ENCODE measurements at regions of chr12 and their contacts with region 1.

Region 1: DNA sequence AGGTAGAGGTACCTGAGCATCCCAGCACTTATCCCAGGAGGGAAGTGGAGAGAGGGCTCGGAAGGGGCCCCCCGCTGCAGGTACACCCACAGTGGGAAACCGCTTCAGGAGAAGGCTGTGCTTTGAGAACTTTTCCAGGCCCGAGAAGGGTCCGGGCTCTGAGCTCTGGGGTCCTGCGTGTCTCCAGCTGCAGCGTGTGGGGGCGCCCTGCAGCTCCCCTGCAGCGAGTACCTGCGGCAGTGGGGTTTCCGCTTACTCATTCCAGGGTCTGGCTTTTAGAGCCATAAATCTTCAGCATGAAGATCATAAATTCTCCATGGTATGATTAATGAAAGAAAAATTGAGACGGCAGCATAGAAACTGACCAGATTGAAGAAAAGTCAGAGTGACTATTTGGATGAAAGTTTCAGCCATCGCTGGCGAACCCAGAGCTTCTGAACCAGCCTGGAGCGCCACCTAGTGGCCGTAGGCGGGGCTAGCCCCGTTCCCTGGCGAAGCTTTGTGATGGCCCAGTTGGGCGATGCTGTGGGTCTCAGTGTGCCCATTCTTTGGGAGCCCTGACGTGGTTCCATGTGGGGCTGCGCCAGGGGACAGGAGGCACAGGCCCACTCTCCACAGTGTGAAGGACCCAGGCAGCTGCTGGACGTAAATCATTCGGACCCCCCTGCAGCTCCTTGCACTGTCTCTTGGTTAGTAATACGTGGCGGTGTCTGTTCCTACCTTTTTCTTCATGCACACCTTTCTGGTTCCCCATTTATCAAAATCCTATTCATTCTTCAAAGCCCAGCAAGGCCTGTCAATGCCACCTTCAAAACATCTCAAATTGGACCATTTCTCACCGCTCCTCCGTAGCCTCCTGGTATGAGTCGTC is 198.2 kb downstream of the TSPAN9 start:
- DNase-seq: peak; percentile 58 to 79
- ATAC-seq: peak; percentile 59 to 85 (median 60)
- H3K4me3 ChIP-seq: no peak overlapping the region
- H3K4me3 Mint-ChIP-seq: no peak overlapping the region
- H3K27ac ChIP-seq: no peak overlapping the region
- H3K27ac Mint-ChIP-seq: no peak overlapping the region
- H3K4me1 ChIP-seq: peaks cover 4% of the 10 kb centered on the region
- H3K4me1 Mint-ChIP-seq: no peaks in the 10 kb centered on the region
- H3K27me3 ChIP-seq: no peaks in the 10 kb centered on the region
- H3K27me3 Mint-ChIP-seq: peaks cover 20 to 23% of the 10 kb centered on the region in 2 donors
- CTCF ChIP-seq: peak; percentile 78

Region 2: GRCh38 chr12:3073438-3074250 is 201.8 kb before region 1 on chr12:
- intact Hi-C with region 1: loop called (anchors 1 kb)
- DNase-seq: peak; percentile 73 to 91
- ATAC-seq: peak; percentile 54 to 68 (median 60)
- H3K4me3 ChIP-seq: no peak overlapping the region
- H3K4me3 Mint-ChIP-seq: no peak overlapping the region
- H3K27ac ChIP-seq: no peak overlapping the region
- H3K27ac Mint-ChIP-seq: no peak overlapping the region
- H3K4me1 ChIP-seq: peaks cover 14% of the 10 kb centered on the region
- H3K4me1 Mint-ChIP-seq: peaks cover 0 to 12% of the 10 kb centered on the region in 2 donors
- H3K27me3 ChIP-seq: peaks cover 3% of the 10 kb centered on the region
- H3K27me3 Mint-ChIP-seq: peaks cover 15 to 21% of the 10 kb centered on the region in 2 donors
- CTCF ChIP-seq: peak; percentile 97

Region 3: DNA sequence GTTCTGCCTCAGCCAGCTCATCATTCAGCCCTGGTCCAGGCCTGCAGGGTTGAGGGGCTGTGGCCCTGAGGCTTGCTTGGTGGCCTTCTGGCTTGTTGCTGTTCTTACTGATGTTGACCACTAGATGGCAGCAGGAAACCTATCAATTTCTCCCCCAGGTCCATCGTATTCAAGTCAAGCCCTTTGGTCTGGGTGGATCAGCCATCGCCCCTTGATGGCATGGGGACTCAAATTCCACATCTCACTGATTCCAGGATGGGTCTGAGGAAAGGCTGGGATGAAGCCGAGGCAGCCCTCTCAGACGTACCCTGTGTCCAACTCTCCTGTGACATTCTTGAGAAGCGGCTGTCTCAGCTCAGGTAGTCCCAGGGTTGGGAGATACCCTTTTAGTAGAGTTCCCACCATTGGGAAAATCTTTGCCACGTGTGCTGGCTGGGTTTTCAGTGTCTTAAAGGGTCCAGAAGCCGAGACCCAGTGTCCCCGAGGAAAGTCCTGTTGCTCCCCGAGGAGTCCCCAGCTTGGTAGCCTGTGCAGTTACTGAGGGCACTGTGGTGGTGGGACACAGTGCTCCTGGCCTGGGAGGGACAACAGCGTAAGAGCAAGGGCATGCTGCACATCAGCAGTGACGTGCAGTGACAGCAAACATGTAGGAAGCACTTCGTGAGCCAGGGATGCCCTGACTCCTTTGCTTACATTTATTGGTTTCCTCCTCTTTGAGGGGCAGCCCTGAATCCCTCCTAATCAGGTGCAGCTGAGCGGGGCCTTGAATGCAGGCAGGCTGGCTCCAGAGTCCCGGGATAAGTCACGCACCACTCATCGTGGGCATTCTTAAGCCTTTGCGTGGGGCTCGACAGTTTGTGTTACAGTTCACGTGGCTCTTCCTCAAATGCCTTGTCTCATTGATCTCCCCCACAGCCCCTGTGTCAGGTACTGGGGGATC is 139.6 kb before region 1 on chr12:
- intact Hi-C with region 1: loop called (anchors 5 kb)
- DNase-seq: peak; percentile 18 to 77
- ATAC-seq: peak; percentile 62 to 85 (median 62)
- H3K4me3 ChIP-seq: no peak overlapping the region
- H3K4me3 Mint-ChIP-seq: no peak overlapping the region
- H3K27ac ChIP-seq: no peak overlapping the region
- H3K27ac Mint-ChIP-seq: no peak overlapping the region
- H3K4me1 ChIP-seq: no peaks in the 10 kb centered on the region
- H3K4me1 Mint-ChIP-seq: no peaks in the 10 kb centered on the region
- H3K27me3 ChIP-seq: peaks cover 3% of the 10 kb centered on the region
- H3K27me3 Mint-ChIP-seq: peaks cover 26 to 31% of the 10 kb centered on the region in 2 donors
- CTCF ChIP-seq: peak; percentile 80

Measured in natural killer cell (primary cell).